Left cardiac atrium (tissue), 4 donors: ENCODE measurements at regions of chr11 and their contacts with region 1.

Region 1: GRCh38 chr11:93543292-93543977 is at the start of gene SMCO4:
- DNase-seq: peak; percentile 90
- ATAC-seq: peak; percentile 87 to 90
- total RNA-seq, gene SMCO4: 35.9 to 40.7 TPM

Region 2: GRCh38 chr11:93234602-93235207 is 308.7 kb before region 1 on chr11:
- intact Hi-C with region 1: loop called (anchors 1 to 5 kb)
- DNase-seq: peak; percentile 77
- ATAC-seq: peak; percentile 97 to 98

Region 3: GRCh38 chr11:93487032-93487483 is 56.4 kb before region 1 on chr11:
- intact Hi-C with region 1: loop called in 1 of 2 experiments (anchors 10 kb)
- DNase-seq: no peak
- ATAC-seq: peak; percentile 45 to 59